ENCODE measurements at regions of chr17 and their contacts with region 1.

Region 1: DNA sequence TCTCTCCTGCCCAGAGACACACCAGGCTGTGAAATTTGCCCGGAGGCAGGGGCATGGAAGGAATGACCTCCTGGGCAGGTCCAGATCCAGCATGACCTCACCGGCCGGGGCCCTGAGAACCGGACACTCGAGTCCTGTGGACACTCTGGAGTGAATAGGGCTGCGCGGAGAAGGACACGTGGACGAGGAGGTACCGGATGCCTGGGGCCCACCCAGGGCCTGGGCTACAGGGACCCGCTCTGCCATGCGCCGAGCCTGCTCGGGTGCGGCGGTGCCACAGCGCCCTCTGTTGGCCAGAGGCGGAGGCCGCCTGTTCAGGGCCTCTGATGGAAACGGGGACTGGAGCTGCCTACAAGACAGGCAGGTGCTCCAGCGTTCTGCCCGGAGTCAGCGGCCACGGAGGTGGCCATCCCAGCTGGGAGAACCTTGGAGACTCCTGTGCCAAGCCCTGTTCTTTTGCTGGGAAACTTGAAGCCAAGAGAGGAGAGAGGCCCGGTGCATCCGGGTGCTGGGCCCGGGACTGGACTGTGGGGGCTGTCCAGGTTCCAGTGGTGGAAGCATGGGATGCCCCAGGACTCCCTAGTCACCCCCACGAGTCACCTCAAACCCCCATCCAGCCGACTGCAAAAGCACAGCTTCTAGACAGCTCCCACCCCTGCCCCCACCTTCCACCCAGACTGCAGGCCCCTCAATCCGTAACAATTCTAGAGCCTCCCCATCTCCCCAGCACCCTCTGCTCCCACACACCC is 19.3 kb upstream of the NXPH3 start:
- DNase-seq: peak; percentile 88
- H3K4me3 ChIP-seq: no peak overlapping the region
- H3K27ac ChIP-seq: no peak overlapping the region
- H3K4me1 ChIP-seq: peaks cover 4% of the 10 kb centered on the region
- H3K27me3 ChIP-seq: no peaks in the 10 kb centered on the region
- CTCF ChIP-seq: peak; percentile 99

Region 2: GRCh38 chr17:49315551-49316257 is 240.7 kb before region 1 on chr17:
- CTCF ChIA-PET with region 1: no interaction called
- POLR2A ChIA-PET with region 1: no interaction called
- intact Hi-C with region 1: loop called (anchors 2 kb)
- DNase-seq: peak; percentile 89
- H3K4me3 ChIP-seq: peak overlapping the region; percentile 3
- H3K27ac ChIP-seq: no peak overlapping the region
- H3K4me1 ChIP-seq: peaks cover 57% of the 10 kb centered on the region
- H3K27me3 ChIP-seq: no peaks in the 10 kb centered on the region
- CTCF ChIP-seq: peak; percentile 85

Region 3: DNA sequence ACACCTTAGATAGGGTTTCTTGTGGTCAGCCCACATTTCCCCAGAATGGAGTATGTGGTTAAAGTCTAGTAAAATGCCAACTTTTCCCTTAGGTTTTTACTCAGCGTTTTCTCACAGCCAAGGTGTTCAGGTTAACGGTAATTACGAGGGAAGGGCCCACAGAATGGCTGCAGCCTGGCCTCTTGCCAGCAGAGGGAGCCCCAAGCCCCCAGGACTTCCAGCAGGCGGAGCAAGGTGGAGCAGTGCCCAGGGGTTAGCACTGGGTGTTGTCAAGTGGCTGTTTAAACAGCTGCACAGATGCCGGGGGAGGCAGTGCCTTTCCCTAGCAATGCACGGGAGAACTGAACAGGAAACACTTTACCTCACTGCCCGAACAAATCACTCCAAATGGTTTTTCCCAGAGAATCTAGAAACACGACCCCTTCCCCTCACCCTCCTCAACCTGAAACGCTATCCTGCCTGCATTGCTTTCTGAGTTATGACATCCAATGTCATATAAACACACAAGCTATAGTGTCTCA is 148.4 kb before region 1 on chr17:
- CTCF ChIA-PET with region 1: interaction called, 26 read pairs
- POLR2A ChIA-PET with region 1: no interaction called
- intact Hi-C with region 1: loop called (anchors 2 kb)
- DNase-seq: peak; percentile 76
- H3K4me3 ChIP-seq: no peak overlapping the region
- H3K27ac ChIP-seq: no peak overlapping the region
- H3K4me1 ChIP-seq: no peaks in the 10 kb centered on the region
- H3K27me3 ChIP-seq: no peaks in the 10 kb centered on the region
- CTCF ChIP-seq: peak; percentile 95

Region 4: DNA sequence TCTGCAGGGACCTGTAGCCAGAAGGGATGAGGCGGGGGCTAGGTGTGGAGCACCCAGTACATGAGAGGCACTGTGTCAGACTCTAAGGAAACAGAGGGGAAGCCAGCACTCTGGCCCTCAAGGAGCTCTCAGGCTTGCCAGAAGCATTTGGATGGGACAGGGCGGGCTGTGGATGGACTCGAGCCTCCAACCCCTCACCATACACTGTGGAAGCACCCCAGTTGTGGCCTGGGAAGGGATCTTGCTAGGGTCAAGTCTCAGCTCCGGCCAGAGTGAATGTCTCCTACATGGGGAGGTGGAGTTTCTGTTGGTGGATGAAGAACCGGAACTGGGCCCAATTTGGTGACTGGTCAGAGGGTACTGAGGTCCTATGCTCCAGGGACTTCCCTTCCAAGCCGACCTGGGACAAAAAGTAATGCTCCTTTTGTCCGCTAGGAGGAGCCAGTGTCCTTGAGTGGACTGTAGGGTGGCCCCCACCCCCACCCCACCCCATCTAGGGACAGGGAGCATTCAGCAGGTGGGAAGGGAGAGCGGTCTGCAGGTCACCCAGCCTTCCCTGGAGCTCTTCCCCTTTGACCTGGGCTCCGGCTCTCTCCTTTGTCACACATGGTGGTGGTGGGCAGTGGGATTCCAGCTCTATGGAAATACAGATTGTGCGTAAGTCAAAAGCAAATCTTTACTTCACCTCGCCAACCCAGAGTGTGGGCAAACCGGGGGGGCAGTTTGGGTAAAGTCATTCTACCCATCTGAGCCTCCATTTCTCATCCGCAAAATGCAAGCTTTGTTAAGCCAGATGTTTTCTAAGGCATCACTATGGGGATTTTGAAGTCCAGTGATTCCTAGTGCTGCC is 121.4 kb before region 1 on chr17:
- CTCF ChIA-PET with region 1: interaction called, 9 read pairs
- POLR2A ChIA-PET with region 1: no interaction called
- intact Hi-C with region 1: loop called (anchors 1 kb)
- DNase-seq: peak; percentile 64
- H3K4me3 ChIP-seq: no peak overlapping the region
- H3K27ac ChIP-seq: no peak overlapping the region
- H3K4me1 ChIP-seq: no peaks in the 10 kb centered on the region
- H3K27me3 ChIP-seq: no peaks in the 10 kb centered on the region
- CTCF ChIP-seq: peak; percentile 81

Region 5: GRCh38 chr17:49496183-49496866 is 60.1 kb before region 1 on chr17:
- CTCF ChIA-PET with region 1: interaction called, 5 read pairs
- POLR2A ChIA-PET with region 1: no interaction called
- intact Hi-C with region 1: loop called (anchors 2 kb)
- DNase-seq: peak; percentile 86
- H3K4me3 ChIP-seq: peak overlapping the region; percentile 84
- H3K27ac ChIP-seq: no peak overlapping the region
- H3K4me1 ChIP-seq: peaks cover 33% of the 10 kb centered on the region
- H3K27me3 ChIP-seq: no peaks in the 10 kb centered on the region
- CTCF ChIP-seq: peak; percentile 71

Region 6: DNA sequence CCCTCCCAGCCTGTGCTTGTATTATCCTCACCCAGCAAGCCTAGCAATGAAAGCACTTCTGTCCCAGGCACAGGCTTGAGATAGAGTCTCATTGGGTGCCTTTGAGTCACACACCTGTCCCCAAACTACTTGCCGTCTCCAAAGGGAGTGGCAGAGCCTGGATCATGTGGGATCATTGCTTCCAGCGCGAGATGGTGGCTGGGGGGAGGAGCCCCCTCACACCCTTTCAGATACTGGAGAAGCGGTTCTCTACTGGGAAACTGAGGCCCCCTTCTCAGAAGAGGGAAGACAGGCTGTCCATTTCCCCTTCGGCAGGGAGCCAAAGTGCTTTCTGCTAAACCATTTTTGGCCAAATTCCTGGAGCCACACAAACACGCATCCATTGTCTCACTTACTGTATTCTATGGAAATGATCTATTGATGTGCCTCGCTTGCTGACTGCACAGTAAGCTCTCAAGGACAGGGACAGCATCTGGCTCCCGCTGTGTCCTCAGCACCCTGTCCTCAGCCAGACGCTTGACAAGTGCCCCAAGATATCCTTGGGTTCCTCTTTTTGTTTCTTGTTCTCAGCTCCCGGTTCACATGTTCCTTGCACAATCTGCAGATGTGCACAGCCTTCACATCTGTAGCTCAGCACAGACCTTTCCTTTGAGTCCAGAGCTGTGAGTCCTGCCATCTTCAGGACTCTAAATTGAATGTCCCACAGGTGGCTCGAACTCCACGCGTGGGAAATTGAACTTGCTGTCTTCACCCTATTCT is 464.6 kb after region 1 on chr17:
- CTCF ChIA-PET with region 1: no interaction called
- POLR2A ChIA-PET with region 1: no interaction called
- intact Hi-C with region 1: no loop called
- DNase-seq: no peak
- H3K4me3 ChIP-seq: no peak overlapping the region
- H3K27ac ChIP-seq: no peak overlapping the region
- H3K4me1 ChIP-seq: no peaks in the 10 kb centered on the region
- H3K27me3 ChIP-seq: no peaks in the 10 kb centered on the region
- CTCF ChIP-seq: no peak